GM12878 (cell line): ENCODE measurements at regions of chr1 and their contacts with region 1.

Region 1: GRCh38 chr1:41639332-41639936 is 155.0 kb upstream of the EDN2 start:
- DNase-seq: no peak
- ATAC-seq: peak; percentile 66
- H3K4me3 ChIP-seq: no peak overlapping the region
- H3K27ac ChIP-seq: peak overlapping the region; percentile 54
- H3K4me1 ChIP-seq: peaks cover 43% of the 10 kb centered on the region
- H3K27me3 ChIP-seq: no peaks in the 10 kb centered on the region
- CTCF ChIP-seq: no peak
- EP300 ChIP-seq: no peak
- POLR2A ChIP-seq: no peak
- RAD21 ChIP-seq: no peak

Region 2: GRCh38 chr1:41474490-41475271 is 164.8 kb before region 1 on chr1:
- CTCF ChIA-PET with region 1: no interaction called
- POLR2A ChIA-PET with region 1: no interaction called
- RAD21 ChIA-PET with region 1: no interaction called
- SMC1A ChIA-PET with region 1: no interaction called
- in situ Hi-C with region 1: no loop called
- intact Hi-C with region 1: no loop called
- DNase-seq: no peak
- ATAC-seq: no peak
- H3K4me3 ChIP-seq: no peak overlapping the region
- H3K27ac ChIP-seq: no peak overlapping the region
- H3K4me1 ChIP-seq: no peaks in the 10 kb centered on the region
- H3K27me3 ChIP-seq: no peaks in the 10 kb centered on the region; a peak in 1 of 4 replicates
- CTCF ChIP-seq: no peak
- EP300 ChIP-seq: no peak
- POLR2A ChIP-seq: no peak
- RAD21 ChIP-seq: no peak

Region 3: GRCh38 chr1:41622859-41623723 is 16.3 kb before region 1 on chr1:
- CTCF ChIA-PET with region 1: interaction called, 5 read pairs
- POLR2A ChIA-PET with region 1: interaction called, 15 read pairs
- RAD21 ChIA-PET with region 1: no interaction called
- SMC1A ChIA-PET with region 1: interaction called, 5 read pairs
- in situ Hi-C with region 1: no loop called
- intact Hi-C with region 1: no loop called
- DNase-seq: peak; percentile 70
- ATAC-seq: peak; percentile 88
- H3K4me3 ChIP-seq: peak overlapping the region; percentile 48
- H3K27ac ChIP-seq: peak overlapping the region; percentile 74
- H3K4me1 ChIP-seq: peaks cover 29% of the 10 kb centered on the region
- H3K27me3 ChIP-seq: no peaks in the 10 kb centered on the region
- CTCF ChIP-seq: no peak
- EP300 ChIP-seq: peak; percentile 55 to 76; a peak in 2 of 4 replicates
- POLR2A ChIP-seq: no peak
- RAD21 ChIP-seq: peak; percentile 13; the same call in 1 of the 2 replicates